ENCODE measurements at regions of chr9 and their contacts with region 1.

Region 1: DNA sequence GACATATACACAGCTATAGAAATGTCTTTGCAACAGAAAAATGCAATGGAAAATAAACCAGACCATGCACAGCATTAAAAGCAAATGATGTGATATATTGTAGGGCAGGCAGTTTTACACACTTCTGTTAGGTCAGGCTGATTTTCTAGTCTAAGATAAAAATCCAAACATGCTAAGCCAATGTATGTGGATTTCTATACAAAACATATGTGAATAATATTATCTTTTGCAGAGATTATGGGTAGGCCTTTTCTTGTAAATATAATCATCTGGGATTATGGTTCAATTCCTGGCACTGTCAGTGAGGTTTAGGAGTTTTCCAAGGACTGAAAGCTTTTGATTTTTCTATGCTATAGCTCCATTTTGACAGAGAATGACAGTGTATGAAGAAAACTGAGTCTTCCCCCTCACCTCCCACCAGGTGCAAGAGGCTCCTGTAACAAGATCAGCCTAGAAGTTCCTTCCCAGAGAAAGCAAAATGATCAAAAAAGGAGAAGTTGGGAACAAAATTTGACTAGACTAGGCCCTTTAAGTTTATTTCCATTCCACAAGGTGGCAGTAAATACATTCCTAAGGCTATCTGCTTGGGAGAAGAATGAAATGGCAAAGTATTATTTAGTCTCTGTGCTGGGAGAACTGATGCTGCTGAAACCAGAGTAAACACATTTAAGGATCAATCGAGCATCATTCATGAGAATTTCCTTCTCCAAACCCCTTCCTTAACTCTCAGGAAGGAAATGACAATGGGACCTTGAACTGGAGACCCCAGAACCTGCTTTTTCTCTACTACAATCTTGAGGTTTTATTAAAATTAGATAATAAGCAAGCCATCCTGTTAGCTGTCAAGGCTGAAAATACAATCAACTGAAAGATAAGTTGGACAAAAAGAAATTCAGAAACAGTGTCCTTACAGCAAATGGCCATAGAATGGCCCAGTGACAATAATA is 133.0 kb upstream of the TUT7 start:
- DNase-seq: no peak
- H3K4me3 ChIP-seq: no peak overlapping the region
- H3K27ac ChIP-seq: no peak overlapping the region
- H3K4me1 ChIP-seq: no peaks in the 10 kb centered on the region
- H3K27me3 ChIP-seq: no peaks in the 10 kb centered on the region
- CTCF ChIP-seq: peak; percentile 48 to 74 (median 56)
- POLR2A ChIP-seq: no peak

Region 2: DNA sequence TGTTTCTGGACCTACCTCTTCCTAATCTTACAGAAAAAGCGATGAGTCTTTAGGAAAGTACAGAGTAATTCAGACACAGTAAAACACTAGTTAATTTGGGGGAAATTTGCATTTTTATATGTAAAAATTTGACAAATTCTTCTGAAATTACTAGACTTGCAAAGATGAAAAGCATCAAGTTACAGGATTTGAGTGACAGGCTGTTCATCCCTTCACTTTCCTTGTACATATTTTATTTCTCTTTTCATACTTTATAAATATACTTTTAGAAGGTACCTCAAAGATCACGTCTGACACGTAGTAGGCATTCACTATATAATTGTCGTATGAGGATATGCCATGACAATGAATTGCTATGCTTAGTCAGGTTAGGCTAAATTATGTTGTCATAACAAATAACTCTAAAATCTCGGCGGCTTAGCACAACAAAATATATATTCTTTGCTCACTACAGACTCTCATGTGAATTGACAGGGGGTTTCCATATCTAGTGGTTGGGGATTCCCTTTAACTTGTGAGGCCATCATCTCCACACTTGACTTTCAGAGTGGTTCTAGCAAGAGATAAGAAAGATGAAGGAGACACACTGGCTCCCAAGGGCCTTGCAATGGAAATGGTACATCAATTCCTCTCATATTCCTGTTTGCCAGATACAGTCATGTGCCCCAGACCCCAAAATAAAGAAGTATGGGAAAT is 21.2 kb after region 1 on chr9:
- intact Hi-C with region 1: no loop called
- DNase-seq: no peak
- H3K4me3 ChIP-seq: no peak overlapping the region
- H3K27ac ChIP-seq: no peak overlapping the region
- H3K4me1 ChIP-seq: no peaks in the 10 kb centered on the region
- H3K27me3 ChIP-seq: peaks cover 0 to 9% (median 0%) of the 10 kb centered on the region in 4 donors
- CTCF ChIP-seq: no peak
- POLR2A ChIP-seq: no peak

Region 3: DNA sequence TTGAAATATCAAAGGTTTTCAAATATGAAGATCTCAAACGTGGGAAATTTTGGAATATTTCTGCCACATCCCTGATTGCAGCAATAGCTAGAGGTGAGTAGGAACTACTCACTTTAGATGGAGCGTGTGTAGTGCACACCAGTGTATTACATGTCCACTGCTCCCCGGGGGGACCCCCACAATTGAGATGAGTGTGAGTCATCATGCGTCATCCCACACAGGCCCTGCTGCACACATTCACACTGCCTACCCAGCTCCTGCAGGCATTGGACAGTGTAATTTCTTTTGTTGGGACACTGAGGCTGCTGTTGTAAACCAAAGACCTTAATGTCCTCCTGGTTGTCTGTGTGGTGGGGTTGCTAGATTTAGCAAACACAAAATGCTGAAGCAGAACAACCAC is 180.1 kb after region 1 on chr9:
- intact Hi-C with region 1: no loop called
- DNase-seq: no peak
- H3K4me3 ChIP-seq: no peak overlapping the region
- H3K27ac ChIP-seq: no peak overlapping the region
- H3K4me1 ChIP-seq: peaks cover 0 to 5% (median 4%) of the 10 kb centered on the region in 3 donors
- H3K27me3 ChIP-seq: peaks cover 0 to 23% (median 0%) of the 10 kb centered on the region in 4 donors
- CTCF ChIP-seq: no peak
- POLR2A ChIP-seq: no peak

Region 4: GRCh38 chr9:86948074-86948929 is 461.1 kb after region 1 on chr9:
- intact Hi-C with region 1: loop called (anchors 5 kb)
- DNase-seq: peak; percentile 15
- H3K4me3 ChIP-seq: peak overlapping the region; percentile 69 to 92 (median 77)
- H3K27ac ChIP-seq: peak overlapping the region; percentile 75 to 94 (median 84)
- H3K4me1 ChIP-seq: peaks cover 4 to 46% (median 13%) of the 10 kb centered on the region in 3 donors
- H3K27me3 ChIP-seq: peaks cover 0 to 25% (median 0%) of the 10 kb centered on the region in 4 donors
- CTCF ChIP-seq: peak; percentile 58 to 90 (median 87)
- POLR2A ChIP-seq: no peak

Region 5: GRCh38 chr9:87324613-87325194 is 837.5 kb after region 1 on chr9:
- intact Hi-C with region 1: loop called (anchors 5 kb)
- DNase-seq: no peak
- H3K4me3 ChIP-seq: no peak overlapping the region
- H3K27ac ChIP-seq: no peak overlapping the region
- H3K4me1 ChIP-seq: no peaks in the 10 kb centered on the region
- H3K27me3 ChIP-seq: peaks cover 0 to 11% (median 0%) of the 10 kb centered on the region in 4 donors
- CTCF ChIP-seq: peak; percentile 64 to 86 (median 80)
- POLR2A ChIP-seq: no peak

Measured in esophagus squamous epithelium (tissue), 5 donors.